ENCODE measurements at regions of chr5 and their contacts with region 1.

Region 1: GRCh38 chr5:173823711-173824528 is 64.2 kb upstream of the CPEB4 start:
- DNase-seq: peak; percentile 98
- ATAC-seq: peak; percentile 86
- H3K4me3 ChIP-seq: peak overlapping the region in 2 of 3 experiments; percentile 38 to 49; a peak in 5 of 6 replicates
- H3K27ac ChIP-seq: peak overlapping the region; percentile 69
- H3K4me1 ChIP-seq: peaks cover 73% of the 10 kb centered on the region
- H3K27me3 ChIP-seq: no peaks in the 10 kb centered on the region
- CTCF ChIP-seq: no peak
- EP300 ChIP-seq: peak in 1 of 2 experiments; percentile 97; a peak in 2 of 4 replicates
- POLR2A ChIP-seq: peak; percentile 25 to 51; a peak in 2 of 4 replicates
- RAD21 ChIP-seq: no peak

Region 2: GRCh38 chr5:173615884-173616576 is 207.9 kb before region 1 on chr5:
- CTCF ChIA-PET with region 1: no interaction called
- POLR2A ChIA-PET with region 1: interaction called, 5 read pairs
- in situ Hi-C with region 1: no loop called
- intact Hi-C with region 1: loop called (anchors 5 kb)
- DNase-seq: peak; percentile 76
- ATAC-seq: peak; percentile 78
- H3K4me3 ChIP-seq: peak overlapping the region; percentile 83 to 92 (median 86)
- H3K27ac ChIP-seq: peak overlapping the region; percentile 79
- H3K4me1 ChIP-seq: peaks cover 61% of the 10 kb centered on the region
- H3K27me3 ChIP-seq: no peaks in the 10 kb centered on the region; a peak in 1 of 5 replicates
- CTCF ChIP-seq: peak; percentile 57
- EP300 ChIP-seq: no peak
- POLR2A ChIP-seq: peak in 1 of 2 experiments; percentile 41; a peak in 1 of 4 replicates
- RAD21 ChIP-seq: no peak; the same call in 1 of the 2 replicates

Region 3: DNA sequence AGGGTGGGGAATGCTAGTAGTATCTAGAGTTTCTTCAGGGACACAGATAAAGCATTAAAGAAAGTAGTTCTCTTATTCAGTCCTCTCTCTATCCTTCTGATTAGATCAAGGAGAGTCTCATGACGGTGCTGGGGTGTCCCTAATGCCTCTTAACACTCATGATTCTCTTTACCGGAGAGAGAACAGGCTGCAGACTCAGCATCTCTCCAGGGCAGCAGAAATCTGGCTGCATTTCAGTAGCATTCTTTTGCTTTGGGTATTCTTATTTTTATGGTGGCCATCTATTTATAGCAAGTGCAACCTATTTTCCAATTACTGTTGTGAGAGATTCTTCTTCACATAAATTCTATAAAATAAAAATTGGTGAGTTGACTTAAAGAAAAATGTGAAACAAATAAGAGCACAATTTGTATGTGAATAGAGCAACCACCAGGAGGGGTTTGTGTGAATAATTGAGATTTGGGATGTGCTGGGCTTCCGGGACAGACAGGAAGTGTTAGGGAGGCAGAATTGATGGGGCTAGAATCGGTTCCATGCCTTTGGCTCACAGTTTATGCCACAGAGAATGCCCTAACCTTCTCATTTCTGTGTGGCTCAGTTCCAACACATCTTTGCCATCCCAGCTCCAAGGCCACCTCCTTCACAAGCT is 183.6 kb before region 1 on chr5:
- CTCF ChIA-PET with region 1: no interaction called
- POLR2A ChIA-PET with region 1: no interaction called
- in situ Hi-C with region 1: no loop called
- intact Hi-C with region 1: no loop called
- DNase-seq: no peak
- ATAC-seq: no peak
- H3K4me3 ChIP-seq: no peak overlapping the region
- H3K27ac ChIP-seq: no peak overlapping the region
- H3K4me1 ChIP-seq: peaks cover 41% of the 10 kb centered on the region
- H3K27me3 ChIP-seq: peaks cover 0 to 10% of the 10 kb centered on the region in 2 experiments; a peak in 2 of 5 replicates
- CTCF ChIP-seq: no peak
- EP300 ChIP-seq: no peak
- POLR2A ChIP-seq: no peak
- RAD21 ChIP-seq: no peak

Region 4: DNA sequence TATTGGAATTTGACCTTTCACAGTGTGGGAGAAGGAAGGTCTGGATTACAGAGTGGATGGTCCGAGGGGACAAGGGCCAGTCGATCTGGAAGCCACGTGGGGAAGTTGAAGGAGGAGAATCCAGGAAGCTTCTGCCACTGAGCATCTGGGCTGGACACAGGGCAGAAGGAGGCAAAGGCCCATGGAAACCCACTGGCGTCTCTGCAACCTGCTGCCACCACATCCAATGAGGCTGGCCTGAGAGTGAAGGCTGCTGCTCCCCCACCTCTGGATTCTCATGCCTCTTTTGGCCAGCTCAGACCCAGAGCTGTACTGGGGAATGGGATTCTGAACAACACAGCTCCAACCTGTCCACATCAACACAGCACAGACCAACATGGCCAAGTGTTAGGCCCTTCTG is 158.6 kb before region 1 on chr5:
- CTCF ChIA-PET with region 1: no interaction called
- POLR2A ChIA-PET with region 1: no interaction called
- in situ Hi-C with region 1: no loop called
- intact Hi-C with region 1: no loop called
- DNase-seq: no peak
- ATAC-seq: no peak
- H3K4me3 ChIP-seq: no peak overlapping the region
- H3K27ac ChIP-seq: no peak overlapping the region
- H3K4me1 ChIP-seq: peaks cover 34% of the 10 kb centered on the region
- H3K27me3 ChIP-seq: peaks cover 0 to 4% of the 10 kb centered on the region in 2 experiments; a peak in 1 of 5 replicates
- CTCF ChIP-seq: no peak
- EP300 ChIP-seq: no peak
- POLR2A ChIP-seq: no peak
- RAD21 ChIP-seq: no peak

Region 5: DNA sequence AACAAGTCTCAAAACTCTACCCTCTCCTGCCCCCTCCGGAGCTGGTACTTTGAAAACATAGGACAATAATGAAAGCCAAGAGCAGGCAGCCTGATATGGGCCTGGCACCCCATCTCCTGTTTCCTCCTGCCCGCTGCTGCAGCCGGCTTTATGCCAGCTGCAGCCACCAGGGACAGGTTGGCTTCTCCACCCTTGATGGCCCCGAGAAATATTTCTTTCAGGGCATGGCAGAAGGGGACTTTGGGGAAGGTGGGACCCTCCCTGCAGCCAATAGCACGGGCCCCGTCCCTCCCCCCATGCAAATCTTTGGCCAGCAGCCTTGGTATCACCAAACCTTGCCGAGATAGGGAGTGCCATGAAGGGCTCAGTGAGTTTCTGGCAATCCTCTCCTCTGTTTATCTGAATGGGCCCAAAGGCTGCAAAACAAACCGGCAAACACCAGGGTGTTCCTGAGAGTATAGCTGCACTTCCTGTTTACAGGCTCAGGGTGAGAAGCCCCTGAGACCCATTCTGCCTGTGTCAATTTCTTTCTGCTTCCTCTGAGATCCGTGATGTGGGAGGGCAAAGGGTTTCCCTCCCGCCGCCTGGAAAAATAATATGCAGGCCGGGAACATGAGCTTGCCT is 134.1 kb before region 1 on chr5:
- CTCF ChIA-PET with region 1: no interaction called
- POLR2A ChIA-PET with region 1: interaction called, 5 read pairs
- in situ Hi-C with region 1: no loop called
- intact Hi-C with region 1: loop called (anchors 10 kb)
- DNase-seq: peak; percentile 23
- ATAC-seq: peak; percentile 66
- H3K4me3 ChIP-seq: peak overlapping the region; percentile 59 to 74 (median 72)
- H3K27ac ChIP-seq: peak overlapping the region; percentile 68
- H3K4me1 ChIP-seq: peaks cover 68% of the 10 kb centered on the region
- H3K27me3 ChIP-seq: no peaks in the 10 kb centered on the region; a peak in 1 of 5 replicates
- CTCF ChIP-seq: no peak
- EP300 ChIP-seq: no peak
- POLR2A ChIP-seq: no peak; a peak in 1 of 4 replicates
- RAD21 ChIP-seq: no peak

Region 6: GRCh38 chr5:173789031-173789920 is 34.6 kb before region 1 on chr5:
- CTCF ChIA-PET with region 1: no interaction called
- POLR2A ChIA-PET with region 1: interaction called, 35 read pairs
- in situ Hi-C with region 1: no loop called
- intact Hi-C with region 1: no loop called
- DNase-seq: peak; percentile 79
- ATAC-seq: peak; percentile 86
- H3K4me3 ChIP-seq: peak overlapping the region in 2 of 3 experiments; percentile 8 to 48; a peak in 2 of 6 replicates
- H3K27ac ChIP-seq: peak overlapping the region; percentile 73
- H3K4me1 ChIP-seq: peaks cover 68% of the 10 kb centered on the region
- H3K27me3 ChIP-seq: no peaks in the 10 kb centered on the region
- CTCF ChIP-seq: no peak
- EP300 ChIP-seq: peak in 1 of 2 experiments; percentile 82; a peak in 2 of 4 replicates
- POLR2A ChIP-seq: no peak
- RAD21 ChIP-seq: no peak; the same call in 1 of the 2 replicates

Region 7: DNA sequence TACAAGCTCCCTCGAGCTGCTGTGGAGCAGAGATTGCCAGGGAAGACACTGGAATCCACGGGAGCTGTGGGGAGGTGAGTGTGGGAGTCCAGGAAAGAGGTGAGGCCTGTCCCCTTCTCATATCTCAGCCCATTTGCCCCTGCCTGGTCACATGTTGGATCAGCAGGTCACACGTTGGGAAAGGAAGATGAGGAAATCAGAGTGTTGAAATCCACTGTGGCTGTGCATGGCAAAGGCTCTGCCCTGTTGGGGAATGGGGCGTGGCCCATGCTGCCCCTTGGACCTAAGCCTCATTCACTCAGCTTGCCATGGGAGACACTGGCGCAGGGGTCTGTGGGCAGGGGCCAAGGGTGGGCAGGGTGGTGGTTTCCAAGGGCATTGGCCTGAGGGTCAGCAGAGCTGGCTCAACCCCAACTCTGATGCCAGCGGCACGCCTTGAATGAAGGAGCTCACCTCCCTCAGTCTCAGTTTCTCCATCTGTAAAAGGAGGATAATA is 21.2 kb before region 1 on chr5:
- CTCF ChIA-PET with region 1: no interaction called
- POLR2A ChIA-PET with region 1: interaction called, 45 read pairs
- in situ Hi-C with region 1: no loop called
- intact Hi-C with region 1: loop called (anchors 2 kb)
- DNase-seq: peak; percentile 95
- ATAC-seq: peak; percentile 84
- H3K4me3 ChIP-seq: peak overlapping the region in 1 of 3 experiments; percentile 36; a peak in 1 of 6 replicates
- H3K27ac ChIP-seq: peak overlapping the region; percentile 58
- H3K4me1 ChIP-seq: peaks cover 87% of the 10 kb centered on the region
- H3K27me3 ChIP-seq: no peaks in the 10 kb centered on the region
- CTCF ChIP-seq: 0 out of 2 replicates have a peak, but pooled peaks have one; percentile 12
- EP300 ChIP-seq: peak; percentile 92 to 96
- POLR2A ChIP-seq: peak in 1 of 2 experiments; percentile 32; a peak in 1 of 4 replicates
- RAD21 ChIP-seq: peak; percentile 37; the same call in 1 of the 2 replicates

Region 8: DNA sequence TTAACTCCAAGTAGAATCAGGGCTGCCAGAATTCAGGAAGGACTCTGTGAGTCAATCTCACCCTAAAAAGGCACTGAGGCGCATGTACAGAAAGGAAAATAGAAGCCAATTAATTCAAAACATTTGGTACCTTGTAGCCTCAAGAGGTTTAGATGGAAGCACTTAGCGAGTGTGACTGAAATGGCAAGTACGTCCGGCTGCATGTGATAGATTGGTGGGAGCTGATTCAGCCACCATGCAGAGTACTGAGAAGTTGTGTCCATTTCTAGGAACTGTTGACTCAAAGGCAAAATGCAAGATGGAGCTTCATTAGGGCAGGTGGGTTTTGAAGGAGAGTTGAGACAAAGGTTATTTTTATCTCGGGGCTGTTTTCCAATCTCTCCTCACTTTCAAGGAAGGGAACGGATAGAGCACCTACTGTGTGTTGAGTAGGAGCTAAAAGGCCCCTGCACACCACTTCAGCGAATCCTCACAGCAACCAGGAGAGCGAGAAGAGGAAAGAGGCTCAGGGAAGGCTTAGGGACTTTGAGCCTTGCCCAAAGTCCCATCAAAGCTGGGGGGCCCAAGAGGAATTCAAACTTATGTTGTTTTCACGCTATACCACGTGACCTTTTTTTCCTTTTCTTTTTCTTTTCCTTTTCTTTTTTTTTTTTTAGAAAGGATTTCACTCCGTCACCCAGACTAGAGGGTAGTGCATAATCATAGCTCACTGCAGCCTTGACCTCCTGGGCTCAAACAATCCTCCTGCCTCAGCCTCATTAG is 29.6 kb after region 1 on chr5:
- CTCF ChIA-PET with region 1: no interaction called
- POLR2A ChIA-PET with region 1: no interaction called
- in situ Hi-C with region 1: no loop called
- intact Hi-C with region 1: no loop called
- DNase-seq: no peak
- ATAC-seq: no peak
- H3K4me3 ChIP-seq: no peak overlapping the region
- H3K27ac ChIP-seq: no peak overlapping the region
- H3K4me1 ChIP-seq: peaks cover 49% of the 10 kb centered on the region
- H3K27me3 ChIP-seq: peaks cover 0 to 4% of the 10 kb centered on the region in 2 experiments; a peak in 2 of 5 replicates
- CTCF ChIP-seq: no peak
- EP300 ChIP-seq: no peak
- POLR2A ChIP-seq: no peak
- RAD21 ChIP-seq: no peak

Region 9: GRCh38 chr5:173872957-173873305 is 49.0 kb after region 1 on chr5:
- CTCF ChIA-PET with region 1: no interaction called
- POLR2A ChIA-PET with region 1: interaction called, 10 read pairs
- in situ Hi-C with region 1: no loop called
- intact Hi-C with region 1: no loop called
- DNase-seq: peak; percentile 26
- ATAC-seq: peak; percentile 75
- H3K4me3 ChIP-seq: peak overlapping the region; percentile 4 to 52 (median 13); a peak in 3 of 6 replicates
- H3K27ac ChIP-seq: no peak overlapping the region
- H3K4me1 ChIP-seq: peaks cover 52% of the 10 kb centered on the region
- H3K27me3 ChIP-seq: no peaks in the 10 kb centered on the region
- CTCF ChIP-seq: no peak
- EP300 ChIP-seq: no peak
- POLR2A ChIP-seq: no peak
- RAD21 ChIP-seq: no peak

Region 10: DNA sequence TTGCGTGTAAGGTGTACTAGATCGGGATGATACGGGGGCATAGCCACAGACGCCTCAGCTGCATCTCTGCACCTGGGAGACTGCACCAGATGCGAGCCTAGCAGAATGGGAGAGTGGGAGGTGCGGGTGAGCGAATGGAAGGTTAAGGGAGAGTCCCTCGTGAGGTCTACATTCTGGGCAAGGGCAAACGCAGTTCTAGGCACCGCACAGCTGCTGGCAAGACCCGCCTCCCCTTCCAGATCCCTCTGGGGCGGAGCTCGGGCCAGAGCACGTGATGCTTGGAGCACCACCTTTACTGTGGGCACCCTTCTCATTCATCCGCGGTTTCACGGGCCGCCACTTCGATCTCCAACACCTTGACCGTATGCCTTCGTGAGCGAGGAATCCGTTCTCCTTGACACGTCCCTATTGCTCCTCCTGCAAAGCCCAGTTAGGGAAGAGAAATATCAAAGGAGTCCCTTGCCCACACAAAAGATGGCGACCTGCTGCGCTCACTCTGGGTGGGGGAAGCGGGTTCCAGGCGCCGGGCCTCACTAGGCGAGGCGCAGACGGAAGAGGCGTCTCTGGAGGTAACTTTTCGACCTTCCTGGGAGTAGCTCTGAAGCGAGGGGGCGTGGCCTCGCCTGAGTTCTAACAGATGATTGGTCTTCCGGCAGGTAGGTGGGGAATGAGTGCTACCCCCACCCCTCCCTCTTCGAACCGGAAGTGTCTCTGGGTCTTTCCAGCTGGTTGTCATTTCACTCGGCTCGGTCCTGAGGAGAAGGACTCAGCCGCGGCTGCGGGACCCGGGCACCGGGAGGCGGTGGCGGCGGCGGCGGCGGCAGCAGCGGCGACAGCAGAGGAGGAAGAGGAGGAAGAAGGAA is 63.9 kb after region 1 on chr5 and contains the start of gene CPEB4:
- CTCF ChIA-PET with region 1: no interaction called
- POLR2A ChIA-PET with region 1: interaction called, 37 read pairs
- in situ Hi-C with region 1: no loop called
- intact Hi-C with region 1: loop called (anchors 2 kb)
- DNase-seq: peak; percentile 99
- ATAC-seq: peak; percentile 98
- H3K4me3 ChIP-seq: peak within 1 kb of the TSS; percentile 79 to 90 (median 81)
- H3K27ac ChIP-seq: peak within 1 kb of the TSS; percentile 92
- H3K4me1 ChIP-seq: peaks cover 48% of the 10 kb centered on the region
- H3K27me3 ChIP-seq: no peaks in the 10 kb centered on the region
- CTCF ChIP-seq: no peak
- EP300 ChIP-seq: no peak
- POLR2A ChIP-seq: peak; percentile 83 to 84
- RAD21 ChIP-seq: no peak
- total RNA-seq, gene CPEB4: 7.7 and 8.3 TPM in 2 replicates

Measured in HepG2 (cell line).